ENCODE measurements at regions of chr12 and their contacts with region 1.

Region 1: GRCh38 chr12:89333564-89334252 is 18.6 kb downstream of the DUSP6 start:
- DNase-seq: peak in 1 of 9 donors; percentile 12
- ATAC-seq: peak; percentile 88
- H3K4me3 ChIP-seq: no peak overlapping the region
- H3K4me3 Mint-ChIP-seq: peak overlapping the region in 8 of 10 donors; percentile 8 to 70 (median 52)
- H3K27ac ChIP-seq: no peak overlapping the region
- H3K27ac Mint-ChIP-seq: peak overlapping the region in 2 of 9 donors; percentile 29 to 60
- H3K4me1 ChIP-seq: peaks cover 0 to 8% of the 10 kb centered on the region in 2 donors
- H3K4me1 Mint-ChIP-seq: peaks cover 12 to 34% (median 14%) of the 10 kb centered on the region in 7 donors
- H3K27me3 ChIP-seq: no peaks in the 10 kb centered on the region
- H3K27me3 Mint-ChIP-seq: no peaks in the 10 kb centered on the region

Region 2: GRCh38 chr12:89280833-89281538 is 52.7 kb before region 1 on chr12:
- CTCF ChIA-PET with region 1: no interaction called
- POLR2A ChIA-PET with region 1: no interaction called
- intact Hi-C with region 1: loop called in 1 of 2 experiments (anchors 5 kb)
- DNase-seq: peak in 7 of 9 donors; percentile 7 to 79 (median 52)
- ATAC-seq: peak; percentile 90
- H3K4me3 ChIP-seq: peak overlapping the region; percentile 1
- H3K4me3 Mint-ChIP-seq: peak overlapping the region in 8 of 10 donors; percentile 44 to 80 (median 64)
- H3K27ac ChIP-seq: no peak overlapping the region
- H3K27ac Mint-ChIP-seq: peak overlapping the region in 8 of 9 donors; percentile 38 to 89 (median 66)
- H3K4me1 ChIP-seq: peaks cover 18 to 22% of the 10 kb centered on the region in 2 donors
- H3K4me1 Mint-ChIP-seq: peaks cover 15 to 47% (median 37%) of the 10 kb centered on the region in 7 donors
- H3K27me3 ChIP-seq: no peaks in the 10 kb centered on the region
- H3K27me3 Mint-ChIP-seq: no peaks in the 10 kb centered on the region

Region 3: DNA sequence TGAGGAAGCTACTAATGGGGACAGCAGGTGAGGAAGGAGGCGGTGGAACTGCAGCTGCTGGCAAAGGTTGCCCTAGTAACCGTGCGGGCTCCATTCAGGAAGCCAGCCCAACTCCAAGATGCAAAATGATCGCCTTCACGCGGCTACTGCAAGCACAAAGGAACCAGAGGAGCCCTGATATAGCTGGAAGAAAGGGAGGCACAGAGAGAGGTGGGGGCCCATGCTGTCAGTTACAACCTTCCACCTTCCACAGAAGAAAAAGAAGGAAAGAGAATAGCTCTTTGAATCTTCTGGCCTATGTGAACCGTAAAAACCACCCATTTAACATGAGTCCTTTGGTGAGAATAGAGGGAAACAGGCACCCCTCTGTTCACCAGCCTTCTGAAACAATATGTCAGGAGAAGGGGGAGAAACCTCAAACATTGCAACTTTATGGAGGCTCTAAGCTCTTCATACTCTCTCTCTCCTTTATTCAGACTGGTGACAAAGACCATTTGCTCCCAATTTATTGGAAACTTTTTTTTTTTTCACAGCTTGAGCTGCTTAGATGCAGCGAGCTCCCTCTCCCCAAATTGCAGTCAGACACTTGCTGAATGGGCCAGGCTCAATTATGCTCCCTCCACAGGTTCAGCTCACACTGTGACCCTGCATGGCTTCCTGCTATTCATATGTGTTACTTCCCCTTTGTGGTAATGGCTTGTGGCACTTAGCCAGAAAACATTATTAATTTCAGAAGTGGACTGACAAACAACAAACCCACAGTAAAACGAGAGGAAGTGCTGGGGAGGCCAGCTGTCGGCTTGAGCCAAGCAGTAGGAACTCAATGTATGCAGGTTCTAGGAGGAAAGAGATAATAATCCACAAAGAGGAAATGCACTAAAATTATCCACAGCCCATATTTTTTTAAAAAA is 12.4 kb after region 1 on chr12:
- CTCF ChIA-PET with region 1: interaction called, 3 read pairs
- POLR2A ChIA-PET with region 1: interaction called, 4 read pairs
- intact Hi-C with region 1: loop called in 1 of 2 experiments (anchors 1 kb)
- DNase-seq: peak in 2 of 9 donors; percentile 7 to 27
- ATAC-seq: peak; percentile 79
- H3K4me3 ChIP-seq: peak overlapping the region; percentile 4
- H3K4me3 Mint-ChIP-seq: peak overlapping the region in 9 of 10 donors; percentile 1 to 98 (median 38)
- H3K27ac ChIP-seq: no peak overlapping the region
- H3K27ac Mint-ChIP-seq: peak overlapping the region in 2 of 9 donors; percentile 53 to 83
- H3K4me1 ChIP-seq: peaks cover 26 to 42% of the 10 kb centered on the region in 2 donors
- H3K4me1 Mint-ChIP-seq: peaks cover 21 to 71% (median 37%) of the 10 kb centered on the region in 7 donors
- H3K27me3 ChIP-seq: no peaks in the 10 kb centered on the region
- H3K27me3 Mint-ChIP-seq: no peaks in the 10 kb centered on the region